WTC11 (cell line): ENCODE measurements at regions of chr15 and their contacts with region 1.

Region 1: DNA sequence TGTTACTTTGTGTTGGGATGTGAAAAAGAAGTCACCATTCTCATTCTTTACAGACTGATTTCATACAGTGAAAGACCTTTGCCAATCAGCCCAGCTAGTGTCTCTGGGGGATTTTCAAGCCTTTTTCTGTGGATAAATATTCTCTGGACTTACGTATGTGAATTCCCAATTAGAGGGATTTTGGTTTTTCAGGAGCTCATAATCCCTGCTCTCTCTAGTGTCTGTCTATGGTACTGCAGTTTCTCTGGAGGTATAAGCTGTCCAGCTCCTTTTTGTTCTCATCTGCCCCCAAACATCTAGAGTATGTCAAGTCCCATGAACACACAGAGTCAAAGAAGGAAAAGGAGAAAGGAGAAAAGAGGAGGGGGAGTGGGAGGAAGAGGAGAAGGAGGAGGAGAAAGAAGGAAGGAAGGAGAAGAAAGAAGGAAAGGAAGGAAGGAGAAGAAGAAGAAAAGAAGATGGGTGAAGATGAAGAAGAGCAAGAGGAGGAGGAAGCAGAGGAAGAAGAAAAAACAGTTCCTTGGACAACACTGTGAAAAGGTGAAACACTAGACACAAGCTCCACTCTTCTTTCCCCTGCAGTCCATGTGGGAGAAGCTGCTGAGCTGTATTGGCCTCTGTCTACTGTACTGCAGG is 218.6 kb downstream of the GREM1 start:
- DNase-seq: no peak
- ATAC-seq: peak; percentile 69
- H3K4me3 Mint-ChIP-seq: no peak overlapping the region
- H3K27ac Mint-ChIP-seq: no peak overlapping the region
- H3K4me1 Mint-ChIP-seq: no peaks in the 10 kb centered on the region
- H3K27me3 Mint-ChIP-seq: no peaks in the 10 kb centered on the region; the same call in 1 of the 2 replicates
- CTCF ChIP-seq: no peak; the same call in 1 of the 2 replicates

Region 2: GRCh38 chr15:32855942-32856341 is 80.5 kb before region 1 on chr15:
- CTCF ChIA-PET with region 1: interaction called, 10 read pairs
- POLR2A ChIA-PET with region 1: no interaction called
- DNase-seq: no peak
- ATAC-seq: peak; percentile 80
- H3K4me3 Mint-ChIP-seq: no peak overlapping the region
- H3K27ac Mint-ChIP-seq: peak overlapping the region; percentile 57
- H3K4me1 Mint-ChIP-seq: peaks cover 17% of the 10 kb centered on the region
- H3K27me3 Mint-ChIP-seq: no peaks in the 10 kb centered on the region
- CTCF ChIP-seq: no peak

Region 3: DNA sequence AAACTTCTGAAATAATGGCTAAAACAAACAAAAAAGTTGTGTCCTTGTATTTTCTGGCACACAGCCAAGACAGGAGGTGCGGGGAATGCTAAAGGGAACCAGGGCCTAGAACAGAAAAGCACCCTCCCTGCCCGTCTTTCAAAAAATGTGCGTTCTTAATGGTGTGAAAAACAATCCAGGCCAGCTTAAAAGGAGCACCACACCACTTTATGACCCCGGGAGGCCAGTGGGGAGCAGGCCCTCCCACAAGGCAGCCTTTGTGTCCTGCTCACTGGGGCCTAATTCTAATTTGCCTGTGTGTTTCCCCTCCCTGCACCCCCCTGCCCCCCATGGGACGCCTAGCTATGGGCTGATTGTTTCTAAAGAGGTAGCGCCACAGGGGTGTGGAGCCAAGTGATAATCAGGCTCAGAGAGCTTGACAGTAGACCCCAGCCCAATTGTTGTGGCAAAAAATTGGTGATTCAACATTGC is 37.2 kb before region 1 on chr15:
- CTCF ChIA-PET with region 1: interaction called, 12 read pairs
- POLR2A ChIA-PET with region 1: no interaction called
- DNase-seq: peak; percentile 78
- ATAC-seq: peak; percentile 93
- H3K4me3 Mint-ChIP-seq: peak overlapping the region; percentile 35
- H3K27ac Mint-ChIP-seq: peak overlapping the region; percentile 83
- H3K4me1 Mint-ChIP-seq: peaks cover 42% of the 10 kb centered on the region
- H3K27me3 Mint-ChIP-seq: peaks cover 23% of the 10 kb centered on the region
- CTCF ChIP-seq: no peak

Region 4: GRCh38 chr15:32908135-32908801 is 28.1 kb before region 1 on chr15:
- CTCF ChIA-PET with region 1: interaction called, 12 read pairs
- POLR2A ChIA-PET with region 1: no interaction called
- DNase-seq: no peak
- ATAC-seq: no peak
- H3K4me3 Mint-ChIP-seq: no peak overlapping the region
- H3K27ac Mint-ChIP-seq: no peak overlapping the region
- H3K4me1 Mint-ChIP-seq: peaks cover 14% of the 10 kb centered on the region
- H3K27me3 Mint-ChIP-seq: no peaks in the 10 kb centered on the region
- CTCF ChIP-seq: no peak

Region 5: GRCh38 chr15:32956006-32956405 is 19.6 kb after region 1 on chr15:
- CTCF ChIA-PET with region 1: interaction called, 25 read pairs
- POLR2A ChIA-PET with region 1: no interaction called
- DNase-seq: no peak
- ATAC-seq: peak; percentile 58
- H3K4me3 Mint-ChIP-seq: no peak overlapping the region
- H3K27ac Mint-ChIP-seq: no peak overlapping the region
- H3K4me1 Mint-ChIP-seq: peaks cover 39% of the 10 kb centered on the region
- H3K27me3 Mint-ChIP-seq: no peaks in the 10 kb centered on the region; the same call in 1 of the 2 replicates
- CTCF ChIP-seq: 0 out of 2 replicates have a peak, but pooled peaks have one; percentile 17

Region 6: GRCh38 chr15:32994810-32995424 is 58.5 kb after region 1 on chr15:
- CTCF ChIA-PET with region 1: interaction called, 10 read pairs
- POLR2A ChIA-PET with region 1: no interaction called
- DNase-seq: no peak
- ATAC-seq: no peak
- H3K4me3 Mint-ChIP-seq: no peak overlapping the region
- H3K27ac Mint-ChIP-seq: no peak overlapping the region
- H3K4me1 Mint-ChIP-seq: peaks cover 9% of the 10 kb centered on the region
- H3K27me3 Mint-ChIP-seq: no peaks in the 10 kb centered on the region
- CTCF ChIP-seq: peak; percentile 51; the same call in 1 of the 2 replicates

Region 7: GRCh38 chr15:33057845-33058244 is 121.4 kb after region 1 on chr15:
- CTCF ChIA-PET with region 1: no interaction called
- POLR2A ChIA-PET with region 1: no interaction called
- DNase-seq: no peak
- ATAC-seq: no peak
- H3K4me3 Mint-ChIP-seq: no peak overlapping the region
- H3K27ac Mint-ChIP-seq: no peak overlapping the region
- H3K4me1 Mint-ChIP-seq: 0 out of 2 replicates have a peak, but pooled peaks cover 5% of the 10 kb centered on the region
- H3K27me3 Mint-ChIP-seq: no peaks in the 10 kb centered on the region; the same call in 1 of the 2 replicates
- CTCF ChIP-seq: no peak